Aorta (tissue), 5 donors: ENCODE measurements at regions of chr14 and their contacts with region 1.

Region 1: DNA sequence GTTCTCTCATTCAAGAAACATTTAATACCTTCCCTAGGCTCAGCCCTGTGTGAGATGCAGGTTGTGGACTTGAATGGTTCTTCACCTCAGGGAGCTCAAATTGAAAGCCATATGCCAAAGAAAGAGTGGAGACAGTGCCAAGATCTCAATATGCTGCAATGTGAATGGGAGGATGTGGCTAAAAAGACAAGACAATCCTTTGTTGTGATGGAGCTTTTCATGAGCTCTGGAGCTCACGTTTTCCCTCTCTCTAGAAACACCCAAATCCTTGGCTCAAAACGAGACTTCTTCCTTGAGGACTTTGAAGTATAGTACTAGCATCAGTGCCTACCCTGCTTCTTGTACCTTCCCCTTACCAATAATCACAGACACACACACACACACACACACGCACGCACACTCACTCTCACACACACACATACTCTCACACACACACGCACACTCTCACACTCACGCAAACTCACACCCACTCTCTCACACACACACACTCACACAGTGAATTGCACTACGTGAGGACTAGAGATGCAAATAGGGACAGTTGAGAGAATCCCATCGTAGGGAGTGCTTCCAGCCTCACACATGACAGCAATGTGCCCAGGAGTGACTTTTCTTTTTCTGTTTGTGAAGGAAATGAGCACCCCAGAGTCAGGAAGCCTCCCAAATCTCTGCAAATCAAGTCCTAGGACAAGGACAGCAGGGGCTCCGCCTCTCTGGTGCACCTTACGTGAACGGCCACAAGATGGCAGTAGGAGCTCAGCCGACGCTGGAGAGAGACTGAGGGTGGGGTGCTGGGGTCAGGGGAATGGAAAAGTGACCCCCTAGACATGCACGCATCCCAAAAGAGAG is 231.4 kb downstream of the PCNX1 start:
- DNase-seq: peak; percentile 59 to 83
- ATAC-seq: peak; percentile 82
- H3K4me3 ChIP-seq: no peak overlapping the region
- H3K27ac ChIP-seq: no peak overlapping the region
- H3K4me1 ChIP-seq: no peaks in the 10 kb centered on the region
- H3K27me3 ChIP-seq: no peaks in the 10 kb centered on the region

Region 2: DNA sequence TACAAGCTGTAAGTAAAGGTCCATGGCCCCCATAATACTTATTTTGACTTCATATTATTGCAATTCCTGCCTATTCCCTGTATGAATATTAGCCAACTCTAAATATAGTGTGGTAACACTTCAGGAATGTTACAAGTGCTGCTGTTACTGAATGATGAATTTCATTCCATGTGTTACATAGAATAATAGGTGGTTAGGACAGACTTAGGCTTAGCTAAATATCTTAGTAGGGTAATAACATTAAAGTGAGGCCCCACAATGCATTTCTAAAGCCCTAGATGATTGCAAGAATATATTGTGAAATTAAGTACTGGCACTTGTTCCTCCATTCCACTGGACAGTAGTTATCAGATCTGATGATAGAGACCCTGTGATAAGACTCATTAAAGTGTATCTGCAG is 48.7 kb before region 1 on chr14:
- intact Hi-C with region 1: no loop called
- DNase-seq: no peak
- ATAC-seq: no peak
- H3K4me3 ChIP-seq: no peak overlapping the region
- H3K27ac ChIP-seq: no peak overlapping the region
- H3K4me1 ChIP-seq: no peaks in the 10 kb centered on the region
- H3K27me3 ChIP-seq: no peaks in the 10 kb centered on the region

Region 3: DNA sequence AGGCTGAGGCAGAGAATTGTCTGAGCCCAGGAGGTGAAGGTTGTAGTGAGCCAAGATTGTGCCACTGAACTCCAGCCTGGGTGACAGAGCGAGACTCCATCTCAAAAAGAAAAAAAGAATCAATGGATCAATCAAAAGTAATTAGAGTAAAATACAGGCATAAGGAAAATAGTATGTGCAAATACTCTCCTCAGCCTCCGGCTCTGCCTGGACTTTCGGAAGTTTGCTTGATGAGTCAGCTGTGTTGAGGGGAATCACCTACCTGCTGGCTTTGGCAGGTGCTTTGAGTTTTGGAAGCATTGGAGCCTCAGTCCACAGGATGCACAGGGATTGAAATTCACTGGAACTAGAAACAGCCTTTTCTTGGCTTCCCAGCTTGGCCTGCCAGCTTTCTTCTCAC is 36.8 kb after region 1 on chr14:
- intact Hi-C with region 1: no loop called
- DNase-seq: peak in 1 of 2 donors; percentile 12
- ATAC-seq: no peak
- H3K4me3 ChIP-seq: no peak overlapping the region
- H3K27ac ChIP-seq: no peak overlapping the region
- H3K4me1 ChIP-seq: no peaks in the 10 kb centered on the region
- H3K27me3 ChIP-seq: no peaks in the 10 kb centered on the region

Region 4: DNA sequence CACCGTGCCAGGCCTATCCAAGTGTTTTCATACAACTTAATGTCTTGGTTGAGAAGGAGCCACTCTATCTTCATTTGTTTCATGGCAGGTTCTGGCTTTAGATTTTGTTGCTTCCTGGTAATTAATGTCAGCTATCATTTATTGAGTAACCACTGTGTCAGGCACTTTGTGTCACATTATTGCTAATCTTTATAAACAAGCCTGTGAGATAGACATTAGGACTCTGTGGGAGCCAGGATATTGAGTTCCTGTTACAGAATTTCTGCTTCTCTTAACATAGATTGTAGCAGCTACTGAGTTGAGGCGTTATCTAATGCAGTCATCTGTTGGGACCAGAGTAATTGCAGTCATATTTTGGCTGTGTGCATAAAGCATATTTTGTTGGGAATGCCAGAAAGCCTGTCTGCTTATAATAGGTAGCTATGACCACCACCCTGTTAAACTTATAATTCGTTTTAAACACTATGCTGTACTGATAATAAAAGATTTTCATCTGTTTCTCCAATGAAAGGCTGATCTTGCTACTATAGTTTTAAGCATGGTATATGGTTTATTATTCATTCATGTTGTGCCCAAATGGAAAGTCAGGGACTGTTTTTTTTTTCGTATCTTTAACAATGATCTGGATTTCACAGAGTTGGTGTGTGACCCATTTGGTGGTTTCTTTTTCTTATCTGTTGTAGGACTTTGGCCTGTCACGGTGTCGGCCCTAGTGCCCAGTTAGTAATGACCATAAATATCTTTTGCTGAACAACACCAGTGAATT is 201.2 kb after region 1 on chr14:
- intact Hi-C with region 1: no loop called
- DNase-seq: no peak
- ATAC-seq: no peak
- H3K4me3 ChIP-seq: no peak overlapping the region
- H3K27ac ChIP-seq: no peak overlapping the region
- H3K4me1 ChIP-seq: peaks cover 2 to 7% of the 10 kb centered on the region in 2 donors
- H3K27me3 ChIP-seq: no peaks in the 10 kb centered on the region

Region 5: DNA sequence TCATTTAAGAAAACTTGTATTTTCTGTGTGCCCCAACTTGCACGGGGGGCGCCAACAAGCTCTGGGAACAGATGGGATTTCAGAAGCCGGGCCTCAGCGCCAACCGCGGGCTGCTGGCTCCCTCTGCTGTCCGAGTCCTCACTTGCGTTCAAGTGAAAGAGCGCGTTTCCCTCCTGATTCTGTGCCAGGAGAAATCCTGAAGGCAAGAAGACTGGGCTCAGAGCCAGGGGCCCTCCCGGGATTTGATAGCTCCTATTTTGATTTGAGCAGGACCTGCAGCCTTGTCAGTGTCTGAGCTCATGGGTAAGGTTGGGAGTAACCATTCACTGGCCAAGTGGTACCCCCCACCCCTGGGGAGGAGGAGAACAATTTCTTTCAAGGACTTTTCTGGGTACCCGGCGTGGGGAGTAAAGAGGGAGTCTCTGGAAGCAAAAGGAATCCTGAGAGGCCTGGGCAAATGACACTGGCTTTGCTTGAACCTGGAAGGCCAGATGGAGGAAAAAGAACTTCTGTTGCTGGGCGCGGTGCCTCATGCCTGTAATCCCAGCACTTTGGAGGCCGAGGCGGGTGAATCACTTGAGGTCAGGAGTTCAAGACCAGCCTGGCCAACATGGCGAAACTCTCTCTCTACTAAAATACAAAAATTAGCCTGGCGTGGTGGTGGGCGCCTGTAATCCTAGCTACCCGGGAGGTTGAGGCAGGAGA is 614.6 kb after region 1 on chr14:
- intact Hi-C with region 1: loop called (anchors 1 to 2 kb)
- DNase-seq: peak; percentile 92 to 96
- ATAC-seq: peak; percentile 92
- H3K4me3 ChIP-seq: no peak overlapping the region
- H3K27ac ChIP-seq: no peak overlapping the region
- H3K4me1 ChIP-seq: no peaks in the 10 kb centered on the region
- H3K27me3 ChIP-seq: no peaks in the 10 kb centered on the region

Region 6: GRCh38 chr14:71855399-71856036 is 716.8 kb after region 1 on chr14:
- intact Hi-C with region 1: loop called (anchors 2 to 10 kb)
- DNase-seq: peak; percentile 73 to 90
- ATAC-seq: peak; percentile 68
- H3K4me3 ChIP-seq: no peak overlapping the region
- H3K27ac ChIP-seq: no peak overlapping the region
- H3K4me1 ChIP-seq: no peaks in the 10 kb centered on the region
- H3K27me3 ChIP-seq: no peaks in the 10 kb centered on the region

Region 7: GRCh38 chr14:72291908-72292688 is 1153.4 kb after region 1 on chr14:
- intact Hi-C with region 1: loop called in 1 of 2 experiments (anchors 5 kb)
- DNase-seq: no peak
- ATAC-seq: peak; percentile 62
- H3K4me3 ChIP-seq: no peak overlapping the region
- H3K27ac ChIP-seq: no peak overlapping the region
- H3K4me1 ChIP-seq: no peaks in the 10 kb centered on the region
- H3K27me3 ChIP-seq: no peaks in the 10 kb centered on the region